Right lobe of liver (tissue), 6 donors: ENCODE measurements at regions of chr2 and their contacts with region 1.

Region 1: DNA sequence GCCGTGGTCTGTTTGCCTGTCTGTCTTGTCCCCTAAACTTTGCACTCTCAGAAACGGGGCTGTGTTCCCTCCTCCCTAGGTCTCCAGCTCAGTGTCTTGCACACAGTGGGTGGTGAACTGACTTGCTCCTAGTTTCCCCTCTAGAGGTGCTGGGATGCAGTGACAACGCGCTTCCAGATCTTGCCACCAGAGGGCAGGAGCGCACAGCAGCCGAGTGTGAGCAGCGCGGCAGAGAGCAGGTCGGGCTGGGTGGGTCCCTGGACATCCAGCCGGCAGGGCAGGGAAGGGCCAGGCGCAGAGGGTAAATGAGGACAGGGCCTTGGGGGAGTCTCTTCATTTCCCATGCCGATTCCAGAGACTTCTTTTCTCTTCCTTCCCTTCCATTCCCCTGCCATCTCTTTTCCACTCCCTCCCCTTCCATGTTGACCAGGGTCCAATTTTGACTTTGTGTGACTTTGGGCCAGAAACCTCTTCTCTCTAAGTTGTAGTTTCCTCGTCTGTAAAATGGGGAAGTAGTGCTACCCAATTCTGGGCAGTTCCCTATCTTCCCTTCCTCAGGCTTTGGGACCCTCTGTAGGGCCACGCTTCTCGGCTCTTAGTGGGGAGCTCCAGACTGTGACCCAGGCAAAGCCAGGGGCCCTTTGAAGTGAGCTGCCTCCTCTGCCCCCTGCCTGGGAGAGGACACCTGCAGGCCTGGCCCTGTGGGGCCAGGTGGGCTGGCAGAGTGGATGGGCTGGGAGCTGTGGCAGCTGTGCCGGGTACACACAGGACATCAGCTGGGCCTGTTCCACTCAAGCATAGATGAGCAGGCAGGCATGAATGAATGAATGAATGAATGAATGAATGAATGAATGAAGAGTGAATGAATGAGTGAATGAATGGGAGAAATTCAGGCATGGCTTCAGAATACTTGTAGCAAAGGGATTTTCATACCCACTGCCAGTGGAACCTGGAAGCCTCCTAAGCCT is 43.3 kb upstream of the TAF1B start:
- DNase-seq: peak; percentile 82 to 85 (median 82)
- ATAC-seq: peak; percentile 89 to 92 (median 91)
- H3K4me3 ChIP-seq: no peak overlapping the region
- H3K27ac ChIP-seq: no peak overlapping the region
- H3K4me1 ChIP-seq: no peaks in the 10 kb centered on the region
- H3K27me3 ChIP-seq: no peaks in the 10 kb centered on the region
- CTCF ChIP-seq: peak; percentile 88 to 96 (median 94)
- POLR2A ChIP-seq: no peak

Region 2: GRCh38 chr2:9768388-9768787 is 31.6 kb before region 1 on chr2:
- intact Hi-C with region 1: no loop called
- DNase-seq: no peak
- ATAC-seq: no peak
- H3K4me3 ChIP-seq: no peak overlapping the region
- H3K27ac ChIP-seq: no peak overlapping the region
- H3K4me1 ChIP-seq: peaks cover 0 to 2% (median 0%) of the 10 kb centered on the region in 4 donors
- H3K27me3 ChIP-seq: no peaks in the 10 kb centered on the region
- CTCF ChIP-seq: no peak
- POLR2A ChIP-seq: no peak

Region 3: GRCh38 chr2:9897331-9897737 is 97.4 kb after region 1 on chr2:
- intact Hi-C with region 1: no loop called
- DNase-seq: no peak
- ATAC-seq: peak in 1 of 4 donors; percentile 53
- H3K4me3 ChIP-seq: no peak overlapping the region
- H3K27ac ChIP-seq: no peak overlapping the region
- H3K4me1 ChIP-seq: peaks cover 0 to 5% (median 0%) of the 10 kb centered on the region in 4 donors
- H3K27me3 ChIP-seq: no peaks in the 10 kb centered on the region
- CTCF ChIP-seq: no peak
- POLR2A ChIP-seq: no peak

Region 4: GRCh38 chr2:9941196-9941995 is 141.4 kb after region 1 on chr2:
- intact Hi-C with region 1: loop called in 1 of 2 experiments (anchors 10 kb)
- DNase-seq: no peak
- ATAC-seq: no peak
- H3K4me3 ChIP-seq: no peak overlapping the region
- H3K27ac ChIP-seq: no peak overlapping the region
- H3K4me1 ChIP-seq: no peaks in the 10 kb centered on the region
- H3K27me3 ChIP-seq: no peaks in the 10 kb centered on the region
- CTCF ChIP-seq: no peak
- POLR2A ChIP-seq: no peak

Region 5: GRCh38 chr2:10057231-10058107 is 257.5 kb after region 1 on chr2:
- intact Hi-C with region 1: loop called (anchors 10 kb)
- DNase-seq: peak in 2 of 3 donors; percentile 23 to 50
- ATAC-seq: peak; percentile 28 to 45 (median 35)
- H3K4me3 ChIP-seq: no peak overlapping the region
- H3K27ac ChIP-seq: no peak overlapping the region
- H3K4me1 ChIP-seq: no peaks in the 10 kb centered on the region
- H3K27me3 ChIP-seq: no peaks in the 10 kb centered on the region
- CTCF ChIP-seq: no peak
- POLR2A ChIP-seq: no peak

Region 6: GRCh38 chr2:10424051-10424450 is 624.1 kb after region 1 on chr2:
- intact Hi-C with region 1: loop called in 1 of 2 experiments (anchors 10 kb)
- DNase-seq: no peak
- ATAC-seq: no peak
- H3K4me3 ChIP-seq: no peak overlapping the region
- H3K27ac ChIP-seq: no peak overlapping the region
- H3K4me1 ChIP-seq: no peaks in the 10 kb centered on the region
- H3K27me3 ChIP-seq: no peaks in the 10 kb centered on the region
- CTCF ChIP-seq: no peak
- POLR2A ChIP-seq: no peak